AG04449 (cell line): ENCODE measurements at regions of chr9 and their contacts with region 1.

Region 1: DNA sequence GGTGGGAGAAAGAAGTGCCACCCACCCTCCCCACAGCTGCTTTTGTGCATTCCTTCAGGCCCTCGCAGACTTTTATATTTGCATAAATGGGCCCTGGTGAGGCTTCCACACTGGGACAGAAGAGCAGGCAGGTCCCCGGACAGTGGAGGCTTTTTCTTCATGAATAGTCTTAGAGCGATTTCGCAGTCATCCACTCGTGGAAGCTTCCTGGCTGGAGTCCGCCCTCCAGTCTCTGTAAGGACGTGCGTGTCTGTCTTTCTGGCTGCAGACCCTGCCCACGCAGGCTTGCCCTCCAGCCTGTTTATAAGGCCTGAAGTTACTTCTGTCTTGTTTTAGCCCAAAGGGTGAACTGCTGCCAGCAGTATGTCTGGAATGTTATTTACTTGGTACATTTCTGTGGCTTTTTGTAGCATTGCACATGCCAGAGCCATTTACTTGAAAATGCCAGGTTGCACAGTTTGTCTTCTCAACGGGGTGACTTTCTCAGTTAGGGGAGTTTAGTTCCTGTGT is 195.7 kb downstream of the AOPEP start:
- DNase-seq: peak; percentile 99
- H3K4me3 ChIP-seq: no peak overlapping the region
- CTCF ChIP-seq: no peak

Region 2: DNA sequence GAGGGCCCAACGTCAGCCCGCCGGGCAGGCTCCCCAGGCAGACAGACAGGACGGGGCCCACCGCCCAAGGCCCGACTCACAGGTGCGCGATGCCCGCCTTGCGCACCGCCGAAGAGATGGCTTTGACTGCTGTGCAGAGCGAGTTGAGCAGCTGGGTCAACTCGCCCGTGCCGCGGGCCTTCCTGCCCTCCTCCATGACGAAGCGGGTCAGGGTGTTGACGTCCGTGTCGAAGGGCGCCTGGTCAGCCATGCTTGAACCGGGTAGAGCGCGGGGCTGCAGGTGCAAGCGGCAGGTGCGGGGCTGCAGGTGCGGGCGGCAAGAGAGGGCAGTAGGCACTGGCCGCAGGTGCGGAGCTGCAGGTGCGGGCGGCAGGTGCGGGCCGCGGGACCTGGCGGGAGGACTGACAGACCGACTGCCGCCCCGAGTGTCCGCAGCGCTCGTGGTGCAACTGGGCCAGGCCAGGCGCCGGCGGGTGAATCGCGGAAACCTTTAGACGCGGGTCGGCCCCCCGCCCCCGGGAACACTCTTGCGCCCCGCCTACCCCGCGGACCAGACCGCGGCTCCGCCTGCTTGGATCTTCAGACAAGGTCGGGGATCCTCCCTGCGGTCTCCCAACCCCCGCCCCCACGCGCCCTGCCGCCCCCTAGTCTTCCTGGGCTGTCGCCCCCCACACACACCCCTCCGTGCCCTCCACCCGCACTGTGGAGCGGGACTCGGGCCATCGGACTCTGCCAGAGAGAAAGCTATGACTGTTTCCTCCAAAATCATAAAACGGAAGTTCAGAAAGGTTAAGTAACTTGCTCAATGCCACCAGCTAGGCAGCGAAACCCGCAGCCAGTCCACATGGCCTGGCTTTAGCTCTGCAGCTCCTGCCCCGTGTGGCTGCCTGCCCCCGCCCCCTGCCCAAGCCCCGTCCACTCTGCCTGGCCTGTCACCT is 282.8 kb before region 1 on chr9 and contains the start of gene FBP1:
- CTCF ChIA-PET with region 1: no interaction called
- POLR2A ChIA-PET with region 1: no interaction called
- DNase-seq: no peak
- H3K4me3 ChIP-seq: peak within 1 kb of the TSS; percentile 39
- CTCF ChIP-seq: no peak

Region 3: DNA sequence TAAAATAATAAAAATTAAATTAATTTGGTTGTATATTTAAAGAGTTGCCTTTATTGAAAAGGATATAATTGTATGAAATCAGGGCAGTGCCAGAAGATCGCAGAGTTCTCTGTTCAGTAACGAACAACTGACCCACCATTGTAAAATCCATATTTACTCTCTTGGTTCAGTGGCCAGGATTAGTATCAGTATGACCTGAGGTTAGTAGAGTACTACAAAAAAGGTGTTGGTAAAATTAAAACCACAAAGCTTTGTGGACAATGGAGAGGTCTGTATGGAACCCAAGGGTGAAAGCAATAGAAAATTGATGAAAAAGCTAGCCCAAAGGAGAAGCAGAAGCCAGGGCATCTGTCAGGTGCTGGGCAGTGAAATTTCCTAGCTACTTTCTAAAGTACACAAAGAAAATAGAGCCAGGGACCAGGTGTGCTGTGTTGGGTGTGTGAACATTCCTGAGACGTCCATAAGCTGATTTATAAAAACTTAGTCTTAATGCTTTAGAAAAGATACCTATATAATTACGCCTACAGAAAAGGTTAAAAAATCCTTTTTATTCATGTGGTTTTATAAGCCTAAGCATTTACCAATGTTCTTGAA is 36.2 kb before region 1 on chr9:
- CTCF ChIA-PET with region 1: no interaction called
- POLR2A ChIA-PET with region 1: no interaction called
- DNase-seq: no peak
- H3K4me3 ChIP-seq: no peak overlapping the region
- CTCF ChIP-seq: no peak

Region 4: GRCh38 chr9:94933429-94933828 is 11.3 kb after region 1 on chr9:
- CTCF ChIA-PET with region 1: no interaction called
- POLR2A ChIA-PET with region 1: interaction called, 10 read pairs
- DNase-seq: peak; percentile 84
- H3K4me3 ChIP-seq: no peak overlapping the region
- CTCF ChIP-seq: no peak